ENCODE measurements at regions of chr14 and their contacts with region 1.

Region 1: DNA sequence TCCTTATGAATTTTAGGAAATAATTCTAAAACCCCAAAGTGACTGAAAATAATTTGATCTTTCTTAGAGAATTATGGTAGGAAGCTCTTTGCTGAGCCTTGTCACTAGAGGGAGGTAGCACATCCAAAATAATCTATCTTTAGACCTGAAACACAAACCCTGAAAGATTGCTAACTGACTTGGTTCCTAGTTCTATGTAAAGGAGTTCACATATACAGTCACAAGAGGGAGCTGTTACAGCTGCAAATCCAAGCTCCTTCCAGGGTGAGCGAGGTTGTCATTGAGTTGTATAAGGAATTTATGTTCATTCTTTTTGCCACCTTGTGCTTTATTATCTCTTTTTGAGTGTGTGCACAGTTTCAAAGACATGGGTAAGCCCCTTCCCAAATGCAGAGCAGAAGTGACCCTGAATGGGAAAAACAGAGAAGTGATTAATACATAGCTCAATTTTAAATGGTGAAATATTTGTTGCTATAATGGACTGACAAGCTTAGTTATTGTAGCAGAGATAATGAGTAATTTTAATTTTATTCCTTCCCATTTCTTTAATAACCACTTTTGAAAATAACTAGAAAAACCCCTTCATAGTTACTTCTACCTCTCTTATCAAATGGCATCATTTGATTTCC is 387.9 kb downstream of the DAD1 start:
- DNase-seq: peak; percentile 16 to 71
- ATAC-seq: peak; percentile 76 to 95
- H3K4me3 ChIP-seq: no peak overlapping the region
- H3K27ac ChIP-seq: no peak overlapping the region
- H3K4me1 ChIP-seq: no peaks in the 10 kb centered on the region
- CTCF ChIP-seq: peak; percentile 59
- EP300 ChIP-seq: no peak
- POLR2A ChIP-seq: no peak
- RAD21 ChIP-seq: peak; percentile 18 to 50; a peak in 2 of 5 replicates

Region 2: DNA sequence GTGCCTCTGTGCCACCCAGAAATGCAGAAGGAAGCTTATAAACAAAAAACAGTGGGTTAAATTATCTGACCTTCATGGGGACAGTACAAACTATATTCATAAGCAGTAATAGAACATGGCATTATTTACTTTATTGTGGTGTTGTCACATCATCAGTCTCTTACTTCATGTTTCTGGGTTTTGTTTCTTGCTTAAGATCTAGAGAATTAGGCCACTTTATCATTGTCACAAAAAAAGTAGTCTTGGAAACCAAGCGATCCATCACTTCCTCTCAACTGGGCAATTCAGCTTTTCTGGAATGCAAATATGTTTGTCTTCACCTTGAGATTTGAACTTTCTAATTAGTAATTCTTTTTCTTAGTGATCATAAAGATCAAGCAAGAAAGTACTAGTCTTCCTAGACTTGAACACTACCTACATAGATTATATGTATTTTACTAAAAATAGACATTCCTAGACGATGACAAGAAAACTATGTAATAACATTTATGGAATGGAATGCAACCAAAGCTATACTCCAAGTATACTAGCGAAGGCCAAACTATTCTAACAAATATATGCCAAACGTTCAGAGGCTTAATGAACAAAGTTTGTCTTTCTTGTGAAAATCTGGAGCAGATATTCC is 24.5 kb after region 1 on chr14:
- CTCF ChIA-PET with region 1: interaction called, 11 read pairs
- POLR2A ChIA-PET with region 1: no interaction called
- DNase-seq: no peak
- ATAC-seq: no peak
- H3K4me3 ChIP-seq: no peak overlapping the region
- H3K27ac ChIP-seq: no peak overlapping the region
- H3K4me1 ChIP-seq: no peaks in the 10 kb centered on the region
- CTCF ChIP-seq: no peak
- EP300 ChIP-seq: no peak
- POLR2A ChIP-seq: no peak
- RAD21 ChIP-seq: no peak